IMR-90 (cell line): ENCODE measurements at regions of chr6 and their contacts with region 1.

Region 1: GRCh38 chr6:119541132-119541905 is 191.8 kb upstream of the MAN1A1 start:
- DNase-seq: peak; percentile 100
- ATAC-seq: peak; percentile 93
- H3K4me3 ChIP-seq: no peak overlapping the region
- H3K27ac ChIP-seq: peak overlapping the region; percentile 85
- H3K4me1 ChIP-seq: peaks cover 14% of the 10 kb centered on the region
- H3K27me3 ChIP-seq: no peaks in the 10 kb centered on the region
- CTCF ChIP-seq: no peak
- POLR2A ChIP-seq: no peak
- RAD21 ChIP-seq: no peak

Region 2: DNA sequence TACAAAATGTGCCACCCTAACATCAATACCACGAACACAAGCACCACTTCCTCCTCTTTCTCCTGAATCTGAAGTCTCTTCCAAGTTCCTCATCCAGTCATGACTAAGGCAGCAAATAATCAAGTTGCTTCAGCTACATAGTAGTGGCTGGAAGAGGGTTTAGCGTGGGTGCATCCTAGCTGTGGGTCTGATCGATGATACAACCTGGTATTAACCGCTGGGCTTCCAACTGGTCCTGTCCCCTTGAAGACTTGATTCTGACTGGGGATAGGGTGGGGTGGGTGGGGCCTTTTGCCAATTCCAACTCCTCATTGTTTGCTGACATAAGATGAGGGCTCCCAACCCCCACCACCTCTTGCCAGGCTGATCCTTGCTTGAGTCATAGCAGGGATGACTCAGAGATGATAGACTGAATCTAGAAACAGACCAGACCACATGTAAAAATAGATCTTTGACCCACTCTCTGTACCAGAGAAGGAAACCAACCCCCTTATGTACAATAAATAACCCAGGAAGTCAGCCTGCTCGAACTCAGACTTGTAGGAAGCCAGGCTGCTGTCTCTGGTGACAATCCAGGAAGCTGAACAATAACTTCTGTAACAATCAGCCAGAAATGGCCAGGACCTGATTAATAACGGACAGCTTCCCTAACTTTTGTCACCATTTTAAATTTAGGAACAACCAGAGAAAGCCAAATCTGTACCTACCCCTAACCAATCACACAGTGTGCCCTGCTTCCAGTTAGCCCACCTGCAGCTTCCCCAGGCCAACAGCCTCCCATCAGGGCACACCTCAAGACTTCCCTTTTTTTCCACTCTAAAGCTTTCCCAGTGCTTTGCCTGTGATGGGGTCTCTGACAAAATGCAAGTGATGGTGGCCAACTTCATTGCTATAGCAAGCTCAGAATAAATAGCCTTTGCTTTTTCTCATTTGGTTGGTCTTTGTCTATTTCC is 393.9 kb before region 1 on chr6:
- CTCF ChIA-PET with region 1: interaction called, 6 read pairs
- POLR2A ChIA-PET with region 1: no interaction called
- dilution Hi-C with region 1: no loop called
- in situ Hi-C with region 1: no loop called
- intact Hi-C with region 1: loop called (anchors 2 kb)
- DNase-seq: peak; percentile 98
- ATAC-seq: peak; percentile 88
- H3K4me3 ChIP-seq: no peak overlapping the region; the same call in 1 of the 2 replicates
- H3K27ac ChIP-seq: peak overlapping the region; percentile 55; the same call in 1 of the 2 replicates
- H3K4me1 ChIP-seq: peaks cover 16% of the 10 kb centered on the region
- H3K27me3 ChIP-seq: no peaks in the 10 kb centered on the region
- CTCF ChIP-seq: no peak
- POLR2A ChIP-seq: no peak
- RAD21 ChIP-seq: no peak

Region 3: GRCh38 chr6:119340796-119341487 is 200.4 kb before region 1 on chr6:
- CTCF ChIA-PET with region 1: no interaction called
- POLR2A ChIA-PET with region 1: no interaction called
- dilution Hi-C with region 1: no loop called
- in situ Hi-C with region 1: no loop called
- intact Hi-C with region 1: no loop called
- DNase-seq: no peak
- ATAC-seq: no peak
- H3K4me3 ChIP-seq: no peak overlapping the region
- H3K27ac ChIP-seq: no peak overlapping the region
- H3K4me1 ChIP-seq: peaks cover 2% of the 10 kb centered on the region; the same call in 1 of the 2 replicates
- H3K27me3 ChIP-seq: no peaks in the 10 kb centered on the region
- CTCF ChIP-seq: no peak
- POLR2A ChIP-seq: no peak
- RAD21 ChIP-seq: no peak

Region 4: DNA sequence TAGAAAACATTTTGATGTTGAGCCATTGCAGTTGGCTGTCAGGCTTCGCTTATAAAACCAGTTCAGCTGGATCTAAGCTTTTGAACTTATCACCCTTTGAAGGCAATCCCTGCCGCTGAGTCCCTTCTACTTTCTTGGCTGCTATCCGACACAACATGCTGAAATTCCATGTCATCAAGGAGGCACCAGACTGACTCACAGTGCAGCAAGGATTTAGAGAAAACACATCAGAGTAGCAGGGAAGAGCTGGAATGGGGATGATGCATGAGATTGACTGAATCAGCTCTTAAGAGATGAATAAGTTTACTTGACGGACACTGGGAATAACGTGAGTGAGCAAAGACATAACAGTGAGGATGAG is 56.7 kb before region 1 on chr6:
- CTCF ChIA-PET with region 1: no interaction called
- POLR2A ChIA-PET with region 1: no interaction called
- dilution Hi-C with region 1: no loop called
- in situ Hi-C with region 1: no loop called
- intact Hi-C with region 1: loop called (anchors 2 kb)
- DNase-seq: peak; percentile 94
- ATAC-seq: peak; percentile 91
- H3K4me3 ChIP-seq: no peak overlapping the region
- H3K27ac ChIP-seq: no peak overlapping the region
- H3K4me1 ChIP-seq: no peaks in the 10 kb centered on the region
- H3K27me3 ChIP-seq: no peaks in the 10 kb centered on the region
- CTCF ChIP-seq: no peak
- POLR2A ChIP-seq: no peak
- RAD21 ChIP-seq: no peak

Region 5: GRCh38 chr6:119612911-119613381 is 71.6 kb after region 1 on chr6:
- CTCF ChIA-PET with region 1: no interaction called
- POLR2A ChIA-PET with region 1: no interaction called
- dilution Hi-C with region 1: no loop called
- in situ Hi-C with region 1: no loop called
- intact Hi-C with region 1: loop called (anchors 2 kb)
- DNase-seq: peak; percentile 52
- ATAC-seq: peak; percentile 81
- H3K4me3 ChIP-seq: no peak overlapping the region
- H3K27ac ChIP-seq: no peak overlapping the region
- H3K4me1 ChIP-seq: peaks cover 5% of the 10 kb centered on the region
- H3K27me3 ChIP-seq: no peaks in the 10 kb centered on the region; the same call in 1 of the 2 replicates
- CTCF ChIP-seq: no peak
- POLR2A ChIP-seq: no peak
- RAD21 ChIP-seq: no peak

Region 6: DNA sequence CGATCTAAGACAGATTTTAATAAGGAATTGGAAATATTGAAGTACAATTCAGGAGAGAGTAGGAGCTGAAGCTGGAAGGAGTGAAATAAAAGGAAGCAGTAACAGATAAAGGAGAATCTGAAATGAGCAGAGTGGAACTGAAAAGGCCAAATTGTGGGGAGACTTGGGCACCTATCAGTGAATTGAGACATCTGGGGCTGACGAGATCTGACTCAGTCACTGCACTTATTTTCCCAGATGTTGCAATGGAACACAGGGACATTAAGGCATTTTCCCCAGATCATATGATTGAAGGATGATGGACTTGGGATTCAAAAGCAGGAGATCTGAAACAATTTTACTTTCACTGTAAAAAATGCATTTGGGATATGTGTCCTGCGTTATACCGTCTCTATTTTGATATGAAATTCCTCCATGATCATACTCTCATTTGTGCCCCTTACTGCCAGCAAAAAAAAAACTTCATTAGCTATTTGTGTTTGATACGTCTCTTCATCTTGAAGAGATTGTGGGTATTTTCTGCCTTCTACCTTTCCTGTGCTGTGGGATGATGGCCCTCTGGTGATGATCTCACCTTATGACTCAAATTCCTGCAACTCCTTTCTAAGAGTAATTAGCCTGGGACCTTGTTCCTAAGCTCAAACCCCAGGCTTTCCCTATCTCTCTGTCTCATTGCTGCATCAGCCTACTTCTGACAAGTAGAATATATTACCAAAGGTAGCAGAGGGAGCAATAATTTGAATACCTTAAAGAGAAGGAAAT is 86.8 kb after region 1 on chr6:
- CTCF ChIA-PET with region 1: no interaction called
- POLR2A ChIA-PET with region 1: no interaction called
- dilution Hi-C with region 1: no loop called
- in situ Hi-C with region 1: no loop called
- intact Hi-C with region 1: loop called (anchors 5 kb)
- DNase-seq: peak; percentile 49
- ATAC-seq: no peak
- H3K4me3 ChIP-seq: no peak overlapping the region
- H3K27ac ChIP-seq: no peak overlapping the region
- H3K4me1 ChIP-seq: no peaks in the 10 kb centered on the region; the same call in 1 of the 2 replicates
- H3K27me3 ChIP-seq: no peaks in the 10 kb centered on the region
- CTCF ChIP-seq: no peak
- POLR2A ChIP-seq: no peak
- RAD21 ChIP-seq: no peak

Region 7: DNA sequence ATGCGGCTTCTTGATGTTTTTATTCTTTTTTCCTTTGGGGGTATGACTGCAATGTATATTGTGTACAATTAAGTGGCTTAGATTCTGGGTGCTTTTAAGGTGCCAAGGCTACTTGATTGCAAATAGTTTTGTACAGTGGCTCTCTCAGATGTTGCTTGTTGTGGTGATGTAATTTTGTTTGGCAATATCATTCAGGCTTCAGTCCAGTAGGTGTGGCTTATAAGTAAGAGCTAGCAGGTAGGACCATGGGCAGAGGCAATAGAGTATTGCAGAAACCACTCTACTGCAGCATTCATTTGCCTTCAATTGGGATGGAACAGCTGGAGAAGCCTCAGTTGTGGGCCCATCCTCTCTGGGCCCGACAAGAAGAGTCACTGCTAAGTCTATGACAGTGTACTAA is 216.1 kb after region 1 on chr6:
- CTCF ChIA-PET with region 1: no interaction called
- POLR2A ChIA-PET with region 1: no interaction called
- dilution Hi-C with region 1: no loop called
- in situ Hi-C with region 1: no loop called
- intact Hi-C with region 1: no loop called
- DNase-seq: no peak
- ATAC-seq: no peak
- H3K4me3 ChIP-seq: no peak overlapping the region
- H3K27ac ChIP-seq: no peak overlapping the region
- H3K4me1 ChIP-seq: no peaks in the 10 kb centered on the region
- H3K27me3 ChIP-seq: no peaks in the 10 kb centered on the region
- CTCF ChIP-seq: no peak
- POLR2A ChIP-seq: no peak
- RAD21 ChIP-seq: no peak